MCF 10A (cell line): ENCODE measurements at regions of chr5 and their contacts with region 1.

Region 1: DNA sequence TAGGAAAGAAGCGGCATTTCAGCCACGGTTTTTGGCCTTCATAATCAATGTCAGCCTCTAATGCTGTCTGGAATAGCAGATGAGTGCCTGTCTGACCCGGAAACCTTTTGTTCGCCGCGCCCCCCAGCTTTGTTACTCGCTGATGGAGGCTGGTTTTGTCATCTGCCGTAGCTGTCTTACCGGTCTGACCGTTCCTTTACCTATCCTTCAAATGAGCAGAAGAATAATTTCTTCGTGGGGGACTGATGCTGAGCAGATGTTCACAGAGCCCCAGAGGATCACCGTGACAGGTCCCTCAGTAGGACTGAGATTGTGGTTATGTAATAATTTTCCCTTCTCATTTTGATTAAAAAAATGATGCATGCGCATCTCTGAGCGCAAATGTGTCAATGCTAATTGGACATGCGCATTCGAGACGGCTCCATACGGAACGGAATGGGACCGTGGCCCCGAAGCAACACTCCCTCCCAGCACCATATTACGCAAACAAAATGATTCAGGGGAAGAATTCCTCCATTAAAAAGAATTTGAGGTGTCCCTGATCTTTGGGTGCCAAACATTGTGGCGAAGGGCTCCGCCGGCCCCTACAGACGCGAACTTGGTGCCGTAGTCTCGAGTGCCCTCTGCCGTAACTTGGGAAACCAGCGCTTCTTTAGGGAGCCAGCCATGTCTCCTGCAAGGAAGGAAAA is 27.6 kb downstream of the TLX3 start:
- DNase-seq: peak; percentile 68
- H3K4me3 Mint-ChIP-seq: peak overlapping the region; percentile 75
- H3K27ac Mint-ChIP-seq: no peak overlapping the region
- H3K4me1 Mint-ChIP-seq: no peaks in the 10 kb centered on the region
- H3K27me3 Mint-ChIP-seq: peaks cover 7% of the 10 kb centered on the region
- CTCF ChIP-seq: peak; percentile 97

Region 2: GRCh38 chr5:170638454-170639220 is 698.0 kb before region 1 on chr5:
- CTCF ChIA-PET with region 1: no interaction called
- POLR2A ChIA-PET with region 1: no interaction called
- intact Hi-C with region 1: loop called (anchors 1 kb)
- DNase-seq: peak; percentile 84
- H3K4me3 Mint-ChIP-seq: no peak overlapping the region
- H3K27ac Mint-ChIP-seq: no peak overlapping the region
- H3K4me1 Mint-ChIP-seq: peaks cover 19% of the 10 kb centered on the region
- H3K27me3 Mint-ChIP-seq: no peaks in the 10 kb centered on the region
- CTCF ChIP-seq: peak; percentile 98

Region 3: DNA sequence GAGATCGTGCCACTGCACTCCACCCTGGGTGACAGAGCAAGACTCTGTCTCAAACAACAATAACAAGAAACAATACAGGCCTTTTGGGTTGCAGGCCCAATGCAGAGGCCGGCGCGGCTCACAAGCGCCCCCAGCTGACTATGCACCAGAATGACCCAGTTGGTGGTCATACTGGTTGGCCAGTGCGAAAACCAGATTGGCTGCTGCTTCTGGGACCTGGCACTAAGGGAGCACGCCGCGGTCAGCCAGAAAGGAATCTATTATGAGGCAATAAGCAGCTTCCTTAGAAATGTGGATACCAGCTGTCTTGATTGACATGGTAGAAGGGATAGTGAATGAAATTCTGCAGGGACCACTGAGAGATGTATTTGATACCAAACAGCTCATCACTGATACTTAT is 439.9 kb before region 1 on chr5:
- CTCF ChIA-PET with region 1: interaction called, 3 read pairs
- POLR2A ChIA-PET with region 1: no interaction called
- intact Hi-C with region 1: loop called (anchors 1 kb)
- DNase-seq: peak; percentile 42
- H3K4me3 Mint-ChIP-seq: no peak overlapping the region
- H3K27ac Mint-ChIP-seq: peak overlapping the region; percentile 49
- H3K4me1 Mint-ChIP-seq: no peaks in the 10 kb centered on the region
- H3K27me3 Mint-ChIP-seq: no peaks in the 10 kb centered on the region
- CTCF ChIP-seq: peak; percentile 53

Region 4: DNA sequence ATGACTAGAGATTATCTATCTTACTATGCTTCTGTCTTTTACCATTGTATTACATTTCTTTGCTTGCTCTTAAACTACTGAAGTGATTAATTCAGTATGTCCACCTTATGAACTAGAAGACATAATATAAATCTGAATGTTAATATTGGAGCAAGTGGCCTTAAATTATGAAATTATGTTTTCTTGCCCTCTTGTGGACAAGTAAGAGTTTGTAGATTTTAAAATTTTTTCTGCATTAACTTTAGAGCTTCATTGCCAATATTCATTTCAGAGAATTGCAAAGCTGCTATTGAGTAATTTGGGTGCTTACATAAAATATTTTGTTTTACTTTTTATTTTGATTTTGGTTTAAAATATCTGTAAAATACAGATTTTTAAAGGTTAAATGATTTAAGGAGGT is 419.6 kb before region 1 on chr5:
- CTCF ChIA-PET with region 1: interaction called, 4 read pairs
- POLR2A ChIA-PET with region 1: no interaction called
- intact Hi-C with region 1: loop called (anchors 5 kb)
- DNase-seq: peak; percentile 22
- H3K4me3 Mint-ChIP-seq: no peak overlapping the region
- H3K27ac Mint-ChIP-seq: no peak overlapping the region
- H3K4me1 Mint-ChIP-seq: no peaks in the 10 kb centered on the region
- H3K27me3 Mint-ChIP-seq: no peaks in the 10 kb centered on the region
- CTCF ChIP-seq: peak; percentile 36

Region 5: GRCh38 chr5:170986598-170986997 is 350.1 kb before region 1 on chr5:
- CTCF ChIA-PET with region 1: interaction called, 10 read pairs
- POLR2A ChIA-PET with region 1: no interaction called
- intact Hi-C with region 1: loop called (anchors 1 kb)
- DNase-seq: peak; percentile 48
- H3K4me3 Mint-ChIP-seq: no peak overlapping the region
- H3K27ac Mint-ChIP-seq: no peak overlapping the region
- H3K4me1 Mint-ChIP-seq: peaks cover 12% of the 10 kb centered on the region
- H3K27me3 Mint-ChIP-seq: no peaks in the 10 kb centered on the region
- CTCF ChIP-seq: peak; percentile 33

Region 6: GRCh38 chr5:171207256-171207847 is 129.3 kb before region 1 on chr5:
- CTCF ChIA-PET with region 1: interaction called, 299 read pairs
- POLR2A ChIA-PET with region 1: no interaction called
- intact Hi-C with region 1: loop called (anchors 1 kb)
- DNase-seq: peak; percentile 69
- H3K4me3 Mint-ChIP-seq: no peak overlapping the region
- H3K27ac Mint-ChIP-seq: no peak overlapping the region
- H3K4me1 Mint-ChIP-seq: peaks cover 4% of the 10 kb centered on the region
- H3K27me3 Mint-ChIP-seq: no peaks in the 10 kb centered on the region
- CTCF ChIP-seq: peak; percentile 74

Region 7: DNA sequence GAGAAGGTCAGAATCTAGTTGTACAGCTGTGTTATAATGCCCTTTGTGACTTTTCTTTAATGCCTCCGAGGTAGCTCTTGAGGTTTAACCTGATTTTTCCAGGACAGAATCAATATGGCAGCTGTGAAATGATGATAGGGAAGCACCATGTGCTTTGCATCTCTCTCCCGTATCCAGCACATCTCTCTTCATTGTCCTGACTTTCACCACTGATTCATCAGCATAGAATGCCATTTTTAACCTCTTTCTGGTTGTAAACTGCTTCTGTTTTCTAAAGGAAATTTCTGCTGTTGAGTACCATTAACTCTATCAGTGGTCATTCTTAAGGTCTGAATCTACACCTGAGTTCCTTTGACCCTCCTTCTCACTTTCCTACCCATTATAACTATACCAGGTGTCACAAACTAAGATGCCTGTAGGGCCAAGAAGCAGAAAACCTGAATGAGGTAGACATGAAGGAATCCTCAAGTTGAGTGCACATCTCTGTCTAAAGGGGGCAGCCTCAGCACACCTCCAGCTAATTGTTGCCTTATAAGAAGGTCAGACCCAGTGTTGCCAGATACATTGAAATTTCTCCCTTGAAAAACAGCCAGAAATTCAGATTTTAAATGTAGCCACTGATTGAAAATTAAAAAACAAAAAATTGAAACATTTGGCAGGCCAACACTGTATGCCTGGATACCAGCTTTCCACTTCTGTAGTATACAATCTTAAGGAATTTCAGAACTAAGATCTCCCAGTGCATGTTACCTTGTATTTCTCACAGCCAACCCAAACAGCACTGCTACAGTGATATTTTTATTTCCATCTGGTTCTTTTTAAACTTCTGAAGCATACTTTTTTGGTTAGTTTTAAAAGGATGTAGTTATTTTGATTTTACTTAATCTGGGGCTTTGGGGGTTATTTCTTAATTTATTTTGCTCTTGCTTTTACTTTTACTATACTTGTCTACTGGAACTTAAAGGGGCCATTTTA is 63.4 kb before region 1 on chr5:
- CTCF ChIA-PET with region 1: interaction called, 4 read pairs
- POLR2A ChIA-PET with region 1: no interaction called
- intact Hi-C with region 1: loop called (anchors 1 kb)
- DNase-seq: peak; percentile 49
- H3K4me3 Mint-ChIP-seq: no peak overlapping the region
- H3K27ac Mint-ChIP-seq: no peak overlapping the region
- H3K4me1 Mint-ChIP-seq: peaks cover 21% of the 10 kb centered on the region
- H3K27me3 Mint-ChIP-seq: no peaks in the 10 kb centered on the region
- CTCF ChIP-seq: peak; percentile 32

Region 8: DNA sequence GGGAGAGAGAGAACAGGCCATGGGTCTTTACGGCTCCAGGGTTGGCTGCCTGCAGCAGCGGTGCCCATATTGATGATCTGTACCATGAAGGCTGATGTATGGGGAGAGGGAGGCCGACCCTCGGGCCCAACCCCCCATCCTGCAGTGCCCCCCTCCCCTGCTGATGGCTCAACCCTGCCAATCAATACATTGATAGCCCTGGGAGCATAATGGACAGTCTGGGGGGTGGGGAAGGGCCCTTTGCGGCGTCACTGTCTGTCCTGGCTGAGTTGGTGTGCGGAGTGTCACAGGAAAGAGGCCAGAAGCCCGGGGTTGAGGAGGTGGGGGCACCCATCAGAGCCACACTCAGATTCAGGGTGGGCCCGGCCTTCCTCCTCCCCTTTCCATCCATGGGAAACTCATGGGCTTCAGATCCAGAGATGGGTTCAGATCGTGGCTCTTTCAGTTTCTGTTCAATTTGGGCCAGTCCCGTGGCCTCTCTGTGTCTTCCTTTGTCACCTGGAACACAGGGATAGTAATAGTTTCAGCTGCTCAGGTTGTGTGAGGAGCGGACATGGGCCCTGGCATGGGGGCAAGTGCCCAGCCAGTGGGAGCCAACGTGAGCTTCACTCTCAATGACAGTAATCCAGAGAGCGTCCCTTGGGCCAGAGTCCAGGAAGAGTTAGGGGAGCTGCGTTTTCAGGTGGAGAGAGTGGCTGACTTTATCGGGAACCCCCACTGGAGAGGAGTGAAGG is 92.3 kb after region 1 on chr5:
- CTCF ChIA-PET with region 1: no interaction called
- POLR2A ChIA-PET with region 1: no interaction called
- intact Hi-C with region 1: no loop called
- DNase-seq: no peak
- H3K4me3 Mint-ChIP-seq: no peak overlapping the region
- H3K27ac Mint-ChIP-seq: no peak overlapping the region
- H3K4me1 Mint-ChIP-seq: no peaks in the 10 kb centered on the region
- H3K27me3 Mint-ChIP-seq: no peaks in the 10 kb centered on the region
- CTCF ChIP-seq: no peak